Spleen (tissue), 13 donors: ENCODE measurements at regions of chr4 and their contacts with region 1.

Region 1: GRCh38 chr4:8468746-8469535 is 28.4 kb downstream of the TRMT44 start:
- DNase-seq: peak; percentile 90
- H3K4me3 ChIP-seq: no peak overlapping the region
- H3K27ac ChIP-seq: no peak overlapping the region
- H3K4me1 ChIP-seq: peaks cover 0 to 7% (median 0%) of the 10 kb centered on the region in 6 donors
- H3K27me3 ChIP-seq: no peaks in the 10 kb centered on the region
- CTCF ChIP-seq: peak; percentile 37 to 88 (median 78)
- POLR2A ChIP-seq: no peak

Region 2: GRCh38 chr4:8594097-8595038 is 125.4 kb after region 1 on chr4:
- intact Hi-C with region 1: loop called (anchors 5 kb)
- DNase-seq: no peak
- H3K4me3 ChIP-seq: no peak overlapping the region
- H3K27ac ChIP-seq: no peak overlapping the region
- H3K4me1 ChIP-seq: peaks cover 0 to 12% (median 2%) of the 10 kb centered on the region in 6 donors
- H3K27me3 ChIP-seq: peaks cover 0 to 65% (median 21%) of the 10 kb centered on the region in 7 donors
- CTCF ChIP-seq: peak in 8 of 11 experiments; percentile 23 to 54 (median 42)
- POLR2A ChIP-seq: no peak

Region 3: DNA sequence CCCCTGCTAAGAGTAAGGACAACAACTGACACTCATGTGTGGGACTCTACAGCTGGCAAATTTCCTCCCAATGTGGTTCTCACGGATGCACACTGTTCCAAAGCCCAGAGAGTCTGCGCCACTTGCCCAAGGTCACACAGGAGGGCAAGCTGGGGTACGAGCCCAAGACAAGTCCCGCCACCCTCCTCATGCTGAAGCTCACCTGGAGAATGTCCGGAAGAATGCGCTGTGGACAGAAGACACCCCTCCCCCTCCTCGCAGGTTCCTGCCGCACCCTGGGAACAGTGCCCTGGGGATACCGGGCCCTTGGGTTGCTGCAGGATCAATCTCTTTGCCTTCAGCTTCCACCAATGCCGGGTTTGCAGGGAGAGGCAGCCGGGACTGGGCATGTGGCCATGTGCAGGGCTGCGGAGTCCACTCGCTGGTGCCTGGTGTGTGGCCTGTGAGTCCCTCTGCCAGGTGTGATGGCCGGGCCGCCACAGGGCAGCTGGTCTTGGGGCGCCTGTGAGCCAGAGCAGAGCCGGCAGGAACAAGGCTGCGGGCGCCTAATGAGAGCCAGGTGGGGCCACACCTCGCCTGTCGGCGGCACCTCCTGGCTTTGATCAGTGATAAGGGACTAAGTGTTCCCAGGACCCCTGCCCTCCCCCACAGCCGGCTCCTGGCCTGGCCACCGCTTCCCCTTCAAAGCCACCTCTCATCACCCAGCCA is 256.0 kb after region 1 on chr4:
- intact Hi-C with region 1: no loop called
- DNase-seq: peak; percentile 68
- H3K4me3 ChIP-seq: no peak overlapping the region
- H3K27ac ChIP-seq: no peak overlapping the region
- H3K4me1 ChIP-seq: no peaks in the 10 kb centered on the region
- H3K27me3 ChIP-seq: peaks cover 0 to 31% (median 0%) of the 10 kb centered on the region in 7 donors
- CTCF ChIP-seq: no peak
- POLR2A ChIP-seq: no peak